Heart left ventricle (tissue), 16 donors: ENCODE measurements at regions of chr13 and their contacts with region 1.

Region 1: GRCh38 chr13:52652196-52652979 is at the start of gene SUGT1:
- DNase-seq: peak; percentile 98 to 99 (median 98)
- ATAC-seq: peak; percentile 99 to 100 (median 99)
- H3K4me3 ChIP-seq: peak within 1 kb of the TSS; percentile 59 to 91 (median 80)
- H3K27ac ChIP-seq: peak within 1 kb of the TSS; percentile 95 to 100 (median 99)
- H3K4me1 ChIP-seq: peaks cover 0 to 47% (median 38%) of the 10 kb centered on the region in 12 donors
- H3K27me3 ChIP-seq: no peaks in the 10 kb centered on the region
- CTCF ChIP-seq: peak; percentile 25 to 87 (median 61)
- POLR2A ChIP-seq: peak in 1 of 2 donors; percentile 61
- total RNA-seq, gene SUGT1: 32.7 to 59.2 (median 47.4) TPM

Region 2: GRCh38 chr13:52850396-52851136 is 198.2 kb after region 1 on chr13:
- intact Hi-C with region 1: loop called in 1 of 10 experiments (anchors 5 kb)
- DNase-seq: peak; percentile 71 to 84 (median 78)
- ATAC-seq: peak; percentile 82 to 93 (median 90)
- H3K4me3 ChIP-seq: peak overlapping the region; percentile 35 to 81 (median 66)
- H3K27ac ChIP-seq: peak overlapping the region in 8 of 12 donors; percentile 16 to 69 (median 52)
- H3K4me1 ChIP-seq: peaks cover 0 to 46% (median 21%) of the 10 kb centered on the region in 12 donors
- H3K27me3 ChIP-seq: peaks cover 35 to 85% (median 50%) of the 10 kb centered on the region in 9 donors
- CTCF ChIP-seq: peak in 2 of 12 donors; percentile 6 to 7
- POLR2A ChIP-seq: no peak

Region 3: DNA sequence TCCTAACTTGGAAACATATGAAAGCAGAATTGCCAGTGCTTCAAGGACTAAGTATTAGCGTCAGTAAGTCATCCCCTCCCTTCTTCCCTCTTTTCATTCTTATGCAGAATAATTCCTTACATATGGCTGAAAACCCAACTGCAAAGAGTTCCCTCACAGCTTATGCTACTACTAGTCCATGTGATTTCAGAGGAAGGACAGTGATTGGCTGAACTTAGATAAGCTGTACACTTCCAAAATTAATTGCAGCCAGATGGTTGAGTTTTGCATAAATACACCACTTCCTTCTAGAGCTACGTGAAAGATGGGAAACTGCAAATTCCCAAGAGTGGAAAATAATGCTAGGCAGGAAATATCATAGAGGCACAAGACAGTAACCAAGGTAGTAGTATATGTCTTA is 1106.6 kb after region 1 on chr13:
- intact Hi-C with region 1: no loop called
- DNase-seq: no peak
- ATAC-seq: no peak
- H3K4me3 ChIP-seq: no peak overlapping the region
- H3K27ac ChIP-seq: no peak overlapping the region
- H3K4me1 ChIP-seq: no peaks in the 10 kb centered on the region
- H3K27me3 ChIP-seq: no peaks in the 10 kb centered on the region
- CTCF ChIP-seq: no peak
- POLR2A ChIP-seq: no peak